Dorsolateral prefrontal cortex (tissue), 120 donors: ENCODE measurements at regions of chr21 and their contacts with region 1.

Region 1: DNA sequence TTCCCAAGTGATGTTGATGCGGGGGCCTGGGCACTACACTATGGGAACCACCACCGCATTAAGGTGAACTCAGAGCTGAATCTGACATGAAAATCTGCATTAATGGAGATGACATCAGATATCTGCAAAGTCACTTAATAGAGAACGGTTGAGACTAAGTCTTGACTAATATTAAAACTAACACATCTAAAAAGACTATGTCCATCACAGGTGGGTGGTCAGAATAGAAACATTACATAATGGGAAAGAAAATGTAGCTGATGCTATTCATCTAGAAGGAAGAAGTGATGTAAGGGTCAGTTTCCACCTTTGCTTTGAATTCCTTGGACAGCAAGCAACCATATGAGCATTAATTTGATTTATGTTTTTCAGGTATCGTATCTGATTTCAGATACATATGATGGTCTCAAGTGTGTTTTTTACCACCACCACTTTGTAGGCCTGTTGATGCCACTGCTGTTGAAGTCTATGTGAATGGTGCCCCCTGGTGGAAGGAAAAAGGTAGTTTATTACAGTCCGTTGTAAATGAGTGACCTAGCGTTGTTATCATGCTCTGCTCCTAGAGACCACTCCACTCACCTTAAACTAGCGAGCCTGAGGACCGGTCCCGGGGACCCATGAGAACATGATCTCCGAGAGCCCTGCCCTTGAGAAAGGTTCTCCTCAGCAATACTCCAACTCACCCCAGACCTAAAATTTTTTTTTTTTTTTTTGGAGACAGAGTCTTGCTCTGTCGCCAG is 73.5 kb downstream of the BACH1 start:
- DNase-seq: peak in 4 of 10 donors; percentile 4 to 61 (median 48)
- H3K4me3 ChIP-seq: no peak overlapping the region
- H3K27ac ChIP-seq: no peak overlapping the region
- H3K27me3 ChIP-seq: no peaks in the 10 kb centered on the region
- CTCF ChIP-seq: peak; percentile 62 to 92 (median 84)

Region 2: GRCh38 chr21:28871388-28872010 is 500.7 kb before region 1 on chr21:
- intact Hi-C with region 1: no loop called
- DNase-seq: no peak
- H3K4me3 ChIP-seq: no peak overlapping the region
- H3K27ac ChIP-seq: no peak overlapping the region
- H3K27me3 ChIP-seq: no peaks in the 10 kb centered on the region
- CTCF ChIP-seq: no peak

Region 3: GRCh38 chr21:29091032-29091431 is 281.2 kb before region 1 on chr21:
- intact Hi-C with region 1: loop called (anchors 1 to 5 kb)
- DNase-seq: no peak
- H3K4me3 ChIP-seq: no peak overlapping the region
- H3K27ac ChIP-seq: peak overlapping the region in 1 of 59 donors; percentile 42
- H3K27me3 ChIP-seq: no peaks in the 10 kb centered on the region
- CTCF ChIP-seq: no peak

Region 4: GRCh38 chr21:29164325-29164942 is 207.8 kb before region 1 on chr21:
- intact Hi-C with region 1: loop called (anchors 5 to 10 kb)
- DNase-seq: no peak
- H3K4me3 ChIP-seq: peak overlapping the region in 2 of 59 donors; percentile 15 to 22
- H3K27ac ChIP-seq: no peak overlapping the region
- H3K27me3 ChIP-seq: no peaks in the 10 kb centered on the region
- CTCF ChIP-seq: peak in 55 of 56 donors; percentile 29 to 82 (median 62)

Region 5: GRCh38 chr21:29318354-29318753 is 53.9 kb before region 1 on chr21:
- intact Hi-C with region 1: no loop called
- DNase-seq: no peak
- H3K4me3 ChIP-seq: no peak overlapping the region
- H3K27ac ChIP-seq: no peak overlapping the region
- H3K27me3 ChIP-seq: no peaks in the 10 kb centered on the region
- CTCF ChIP-seq: no peak

Region 6: GRCh38 chr21:29499734-29500343 is 127.6 kb after region 1 on chr21:
- intact Hi-C with region 1: loop called in 1 of 2 experiments (anchors 10 kb)
- DNase-seq: peak in 3 of 10 donors; percentile 15 to 36 (median 34)
- H3K4me3 ChIP-seq: no peak overlapping the region
- H3K27ac ChIP-seq: no peak overlapping the region
- H3K27me3 ChIP-seq: no peaks in the 10 kb centered on the region
- CTCF ChIP-seq: peak in 55 of 56 donors; percentile 18 to 71 (median 54)

Region 7: DNA sequence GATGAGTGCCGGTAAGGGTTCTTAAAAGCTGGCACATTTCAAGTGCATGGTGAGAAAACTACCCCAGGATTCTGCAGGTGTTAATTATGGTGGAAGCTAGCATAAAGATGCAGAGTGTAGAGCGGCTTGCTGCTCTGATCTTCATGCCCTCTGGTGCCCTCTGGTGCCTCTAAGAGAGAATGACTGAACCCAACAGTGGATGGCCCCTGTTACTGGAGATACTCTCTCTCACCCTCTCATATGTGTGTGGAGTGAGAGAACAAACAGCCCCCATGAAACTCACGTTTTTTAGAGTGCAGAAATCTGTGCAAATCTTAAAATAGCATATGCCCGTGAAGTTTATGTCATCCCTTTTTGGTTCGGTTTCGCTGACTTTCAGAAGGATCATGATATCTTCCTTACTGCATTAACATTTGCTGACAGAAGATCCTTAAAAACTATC is 477.5 kb after region 1 on chr21:
- intact Hi-C with region 1: loop called in 1 of 2 experiments (anchors 10 kb)
- DNase-seq: peak in 8 of 10 donors; percentile 12 to 70 (median 54)
- H3K4me3 ChIP-seq: no peak overlapping the region
- H3K27ac ChIP-seq: no peak overlapping the region
- H3K27me3 ChIP-seq: no peaks in the 10 kb centered on the region
- CTCF ChIP-seq: peak; percentile 37 to 83 (median 72)